ENCODE measurements at regions of chr9 and their contacts with region 1.

Region 1: DNA sequence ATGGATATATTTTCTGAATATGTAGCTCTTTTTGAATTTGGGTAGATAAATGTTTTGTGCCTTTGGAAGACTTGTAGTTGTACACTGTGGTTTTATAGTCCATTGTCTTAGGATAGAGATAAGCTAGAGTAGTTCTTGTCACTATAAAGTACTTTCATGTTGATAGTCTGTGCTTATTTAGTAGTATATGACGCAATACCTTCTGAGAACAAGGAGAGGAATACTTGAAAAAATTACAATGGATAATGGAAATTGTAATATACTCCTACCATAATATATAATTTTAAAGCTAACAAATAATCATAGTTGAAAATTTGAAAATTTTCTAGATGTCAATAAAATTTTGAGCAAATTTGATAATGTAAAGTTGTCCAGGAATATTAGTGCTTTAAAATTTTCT is 664.0 kb downstream of the TLE4 start:
- DNase-seq: no peak
- H3K4me3 ChIP-seq: no peak overlapping the region
- H3K27ac ChIP-seq: no peak overlapping the region
- H3K4me1 ChIP-seq: no peaks in the 10 kb centered on the region
- H3K27me3 ChIP-seq: no peaks in the 10 kb centered on the region
- CTCF ChIP-seq: no peak
- POLR2A ChIP-seq: no peak

Region 2: DNA sequence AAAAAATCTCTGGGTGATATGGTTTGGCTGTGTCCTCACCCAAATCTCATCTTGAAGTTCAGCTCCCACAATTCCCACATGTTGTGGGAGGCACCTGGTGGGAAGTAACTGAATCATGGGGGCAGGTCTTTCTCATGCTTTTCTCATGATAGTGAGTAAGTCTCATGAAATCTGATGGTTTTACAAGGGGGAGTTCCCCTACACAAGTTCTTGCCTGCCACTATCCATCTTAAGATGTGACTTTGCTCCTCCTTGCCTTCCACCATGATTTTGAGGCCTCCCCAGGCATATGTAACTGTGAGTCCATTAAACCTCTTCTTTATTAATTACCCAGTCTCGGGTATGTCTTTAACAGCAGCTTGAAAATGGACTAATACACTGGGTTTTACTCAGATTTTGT is 150.1 kb before region 1 on chr9:
- intact Hi-C with region 1: loop called (anchors 5 kb)
- DNase-seq: no peak
- H3K4me3 ChIP-seq: no peak overlapping the region
- H3K27ac ChIP-seq: no peak overlapping the region
- H3K4me1 ChIP-seq: no peaks in the 10 kb centered on the region
- H3K27me3 ChIP-seq: no peaks in the 10 kb centered on the region
- CTCF ChIP-seq: no peak
- POLR2A ChIP-seq: no peak

Measured in breast epithelium (tissue), 4 donors.